Esophagus muscularis mucosa (tissue), 4 donors: ENCODE measurements at regions of chr7 and their contacts with region 1.

Region 1: GRCh38 chr7:151519765-151520418 is at the start of gene RHEB:
- DNase-seq: peak; percentile 100
- H3K4me3 ChIP-seq: peak within 1 kb of the TSS; percentile 71 to 99 (median 86)
- H3K27ac ChIP-seq: peak within 1 kb of the TSS; percentile 97 to 100 (median 100)
- H3K4me1 ChIP-seq: peaks cover 32 to 44% (median 42%) of the 10 kb centered on the region in 4 donors
- H3K27me3 ChIP-seq: no peaks in the 10 kb centered on the region
- CTCF ChIP-seq: no peak
- EP300 ChIP-seq: peak; percentile 33
- POLR2A ChIP-seq: no peak
- total RNA-seq, gene RHEB: 98.5 to 187 (median 163) TPM

Region 2: GRCh38 chr7:150727381-150727780 is 792.5 kb before region 1 on chr7:
- intact Hi-C with region 1: no loop called
- DNase-seq: no peak
- H3K4me3 ChIP-seq: no peak overlapping the region
- H3K27ac ChIP-seq: no peak overlapping the region
- H3K4me1 ChIP-seq: peaks cover 0 to 4% (median 0%) of the 10 kb centered on the region in 4 donors
- H3K27me3 ChIP-seq: peaks cover 0 to 2% (median 0%) of the 10 kb centered on the region in 4 donors
- CTCF ChIP-seq: no peak
- EP300 ChIP-seq: no peak
- POLR2A ChIP-seq: no peak

Region 3: GRCh38 chr7:151368136-151368571 is 151.7 kb before region 1 on chr7:
- intact Hi-C with region 1: loop called (anchors 10 kb)
- DNase-seq: peak; percentile 96
- H3K4me3 ChIP-seq: no peak overlapping the region
- H3K27ac ChIP-seq: peak overlapping the region; percentile 71 to 85 (median 78)
- H3K4me1 ChIP-seq: peaks cover 12 to 34% (median 33%) of the 10 kb centered on the region in 4 donors
- H3K27me3 ChIP-seq: no peaks in the 10 kb centered on the region
- CTCF ChIP-seq: peak; percentile 94 to 100 (median 97)
- EP300 ChIP-seq: no peak
- POLR2A ChIP-seq: no peak